ENCODE measurements at regions of chr5 and their contacts with region 1.

Region 1: GRCh38 chr5:155239803-155240202 is 226.2 kb downstream of the KIF4B start:
- DNase-seq: no peak
- H3K4me3 ChIP-seq: no peak overlapping the region
- H3K27ac ChIP-seq: no peak overlapping the region
- H3K4me1 ChIP-seq: no peaks in the 10 kb centered on the region
- H3K27me3 ChIP-seq: no peaks in the 10 kb centered on the region
- CTCF ChIP-seq: no peak
- EP300 ChIP-seq: no peak
- POLR2A ChIP-seq: no peak

Region 2: GRCh38 chr5:155211764-155212163 is 28.0 kb before region 1 on chr5:
- in situ Hi-C with region 1: no loop called
- intact Hi-C with region 1: loop called (anchors 1 kb)
- DNase-seq: no peak
- H3K4me3 ChIP-seq: no peak overlapping the region
- H3K27ac ChIP-seq: no peak overlapping the region
- H3K4me1 ChIP-seq: no peaks in the 10 kb centered on the region
- H3K27me3 ChIP-seq: no peaks in the 10 kb centered on the region
- CTCF ChIP-seq: no peak
- EP300 ChIP-seq: no peak
- POLR2A ChIP-seq: no peak